ENCODE measurements at regions of chr4 and their contacts with region 1.

Region 1: DNA sequence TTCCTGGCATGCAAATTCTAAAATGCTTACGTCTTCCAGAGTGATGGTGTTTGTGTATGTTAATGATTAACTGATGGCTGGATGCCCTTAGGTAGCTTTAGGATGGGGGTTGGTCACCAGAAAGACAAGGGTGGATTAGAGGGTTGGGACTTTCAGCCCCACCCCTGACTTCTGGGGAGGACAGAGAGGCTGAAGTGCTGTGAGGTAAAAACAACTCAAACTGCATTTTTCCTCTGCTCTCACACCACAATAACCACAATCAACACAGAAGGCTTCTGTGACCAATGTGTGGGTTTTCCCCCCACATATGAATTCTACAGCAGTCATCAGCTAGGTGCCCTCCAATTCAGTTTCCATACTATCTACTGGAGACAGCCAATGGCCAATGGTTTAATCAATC is 18.7 kb upstream of the DDIT4L start:
- DNase-seq: no peak
- ATAC-seq: no peak
- H3K4me3 ChIP-seq: no peak overlapping the region
- H3K27ac ChIP-seq: no peak overlapping the region
- H3K4me1 ChIP-seq: peaks cover 14% of the 10 kb centered on the region
- H3K27me3 ChIP-seq: no peaks in the 10 kb centered on the region
- CTCF ChIP-seq: no peak

Region 2: GRCh38 chr4:100198061-100198460 is 10.9 kb before region 1 on chr4:
- intact Hi-C with region 1: no loop called
- DNase-seq: no peak
- ATAC-seq: no peak
- H3K4me3 ChIP-seq: no peak overlapping the region
- H3K27ac ChIP-seq: no peak overlapping the region
- H3K4me1 ChIP-seq: no peaks in the 10 kb centered on the region
- H3K27me3 ChIP-seq: no peaks in the 10 kb centered on the region
- CTCF ChIP-seq: no peak

Region 3: DNA sequence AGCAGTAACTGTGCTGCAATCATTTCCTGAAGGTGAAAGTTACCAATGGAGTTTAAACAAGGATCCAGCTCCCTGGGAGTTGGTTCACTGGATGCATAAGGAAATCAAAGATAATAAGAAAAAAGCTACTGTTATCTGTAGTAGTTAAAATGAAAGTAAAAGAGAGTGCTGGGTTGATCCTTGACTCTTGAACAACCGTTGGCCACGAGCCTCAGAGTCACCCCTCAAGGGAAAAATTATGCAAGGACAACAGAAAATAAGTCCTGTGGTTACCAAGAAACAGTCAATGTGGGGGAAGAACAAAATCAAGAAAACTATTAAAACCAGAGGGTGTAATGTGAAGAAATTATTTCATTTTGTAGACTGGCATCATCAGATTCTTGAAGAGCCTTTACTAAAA is 31.0 kb after region 1 on chr4:
- intact Hi-C with region 1: loop called (anchors 5 kb)
- DNase-seq: no peak
- ATAC-seq: no peak
- H3K4me3 ChIP-seq: no peak overlapping the region
- H3K27ac ChIP-seq: no peak overlapping the region
- H3K4me1 ChIP-seq: no peaks in the 10 kb centered on the region
- H3K27me3 ChIP-seq: no peaks in the 10 kb centered on the region
- CTCF ChIP-seq: no peak